Left colon (tissue), 2 donors: ENCODE measurements at regions of chrX and their contacts with region 1.

Region 1: GRCh38 chrX:50168241-50168687 is 32.5 kb downstream of the AKAP4 start:
- DNase-seq: no peak
- ATAC-seq: no peak

Region 2: DNA sequence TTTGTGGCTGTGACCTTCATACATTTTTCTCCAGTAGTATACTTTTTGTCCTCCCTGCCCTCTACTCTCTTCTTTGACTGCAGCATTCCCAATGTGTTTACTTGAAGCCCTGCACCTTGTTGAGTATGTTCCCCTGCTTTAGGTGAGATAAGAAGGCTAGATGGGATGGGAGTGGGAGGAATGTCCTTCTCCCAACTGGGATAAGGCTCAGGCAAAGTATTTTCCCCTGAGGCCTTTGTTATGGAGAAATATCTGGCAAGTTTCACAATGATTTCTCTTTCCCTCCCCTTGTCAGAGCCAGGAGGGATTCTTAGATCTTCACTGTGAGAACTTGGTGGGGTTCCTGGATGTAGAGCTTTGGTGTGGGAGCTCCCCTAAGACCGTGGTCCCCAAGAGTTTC is 114.1 kb before region 1 on chrX:
- intact Hi-C with region 1: no loop called
- DNase-seq: no peak
- ATAC-seq: no peak

Region 3: GRCh38 chrX:50111742-50112141 is 56.5 kb before region 1 on chrX:
- intact Hi-C with region 1: loop called in 1 of 2 experiments (anchors 10 kb)
- DNase-seq: peak; percentile 52 to 75
- ATAC-seq: peak; percentile 68